ENCODE measurements at regions of chr3 and their contacts with region 1.

Region 1: DNA sequence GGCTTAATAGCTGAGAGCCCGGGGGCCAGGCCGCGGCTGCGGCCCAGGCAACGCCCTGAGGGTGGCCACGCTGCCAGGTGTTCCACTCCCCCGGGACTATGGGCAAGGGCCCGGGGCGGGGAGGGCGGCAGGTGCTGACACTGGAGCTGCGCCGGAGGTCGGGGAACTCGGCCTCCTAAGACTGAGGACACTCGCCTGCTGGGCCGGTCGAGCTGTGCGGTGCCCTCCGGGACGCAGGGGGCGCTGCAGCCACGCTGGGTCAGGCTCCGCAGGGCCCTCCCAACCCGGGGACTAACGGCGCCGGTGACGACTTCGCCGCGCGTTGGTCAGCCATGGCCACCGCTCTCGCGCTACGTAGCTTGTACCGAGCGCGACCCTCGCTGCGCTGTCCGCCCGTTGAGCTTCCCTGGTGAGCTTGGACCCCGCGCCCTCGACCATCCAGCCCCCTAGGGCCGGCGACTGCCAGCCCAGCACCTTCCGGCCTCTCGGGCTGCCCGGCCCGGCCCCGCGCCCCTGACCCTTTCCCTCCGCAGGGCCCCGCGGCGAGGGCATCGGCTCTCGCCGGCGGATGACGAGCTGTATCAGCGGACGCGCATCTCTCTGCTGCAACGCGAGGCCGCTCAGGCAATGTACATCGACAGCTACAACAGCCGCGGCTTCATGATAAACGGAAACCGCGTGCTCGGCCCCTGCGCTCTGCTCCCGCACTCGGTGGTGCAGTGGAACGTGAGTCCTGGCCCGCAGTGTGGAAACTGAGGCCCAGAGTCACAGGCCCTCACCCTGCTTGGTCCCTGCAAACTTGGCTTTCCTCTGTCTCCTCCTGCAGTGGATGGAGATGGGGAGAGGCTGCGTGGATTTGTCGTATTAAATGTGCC is at the start of gene NDUFAF3:
- DNase-seq: peak; percentile 95
- ATAC-seq: peak; percentile 53
- H3K4me3 ChIP-seq: peak within 1 kb of the TSS; percentile 94
- H3K27ac ChIP-seq: peak within 1 kb of the TSS; percentile 95
- H3K4me1 ChIP-seq: peaks cover 35% of the 10 kb centered on the region; the same call in 1 of the 2 replicates
- H3K27me3 ChIP-seq: no peaks in the 10 kb centered on the region
- CTCF ChIP-seq: peak; percentile 86
- total RNA-seq, gene NDUFAF3: 191 and 211 TPM in 2 replicates

Region 2: GRCh38 chr3:48989796-48990635 is 32.0 kb before region 1 on chr3 and contains the start of gene P4HTM:
- CTCF ChIA-PET with region 1: interaction called, 14 read pairs
- POLR2A ChIA-PET with region 1: interaction called, 5 read pairs
- intact Hi-C with region 1: no loop called
- DNase-seq: peak; percentile 88
- ATAC-seq: peak; percentile 73
- H3K4me3 ChIP-seq: peak within 1 kb of the TSS; percentile 90
- H3K27ac ChIP-seq: peak within 1 kb of the TSS; percentile 49
- H3K4me1 ChIP-seq: peaks cover 22% of the 10 kb centered on the region
- H3K27me3 ChIP-seq: no peaks in the 10 kb centered on the region
- CTCF ChIP-seq: peak; percentile 51
- total RNA-seq, gene P4HTM: 44.5 and 50.1 TPM in 2 replicates

Region 3: DNA sequence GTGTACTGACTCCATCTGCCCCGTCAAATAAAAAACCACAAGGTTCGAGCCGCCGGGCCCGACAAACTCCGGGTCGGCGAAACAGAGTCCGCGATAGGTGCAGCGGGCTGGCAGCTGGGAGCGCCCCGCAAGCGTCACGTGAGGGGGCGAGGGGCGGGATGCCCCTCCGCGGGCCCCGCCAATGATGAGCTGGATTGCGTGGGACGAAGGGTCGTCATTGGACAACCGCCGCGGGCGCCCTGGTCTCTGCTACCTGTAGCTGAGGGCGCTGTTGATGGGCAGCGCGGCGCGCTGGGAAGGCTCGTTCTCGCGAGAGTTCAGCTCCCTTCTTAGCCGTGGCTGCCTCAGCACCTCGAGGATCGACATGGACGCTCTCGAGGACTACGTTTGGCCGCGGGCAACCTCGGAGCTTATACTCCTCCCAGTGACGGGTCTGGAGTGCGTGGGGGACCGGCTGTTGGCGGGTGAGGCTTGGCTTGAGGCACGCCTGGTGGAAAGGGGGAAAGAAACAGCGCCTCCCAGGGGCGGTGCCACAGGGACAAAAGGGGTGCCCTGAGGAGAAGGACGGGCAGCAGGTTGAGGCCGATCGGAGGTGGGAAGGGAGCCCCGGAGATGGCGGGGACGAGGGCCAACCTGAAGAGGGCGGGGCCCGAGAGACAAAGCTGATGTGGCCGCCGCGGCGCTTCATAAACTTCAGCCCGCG is 14.8 kb before region 1 on chr3 and contains the start of gene WDR6:
- CTCF ChIA-PET with region 1: interaction called, 8 read pairs
- POLR2A ChIA-PET with region 1: interaction called, 51 read pairs
- intact Hi-C with region 1: loop called (anchors 1 kb)
- DNase-seq: peak; percentile 99
- ATAC-seq: peak; percentile 89
- H3K4me3 ChIP-seq: peak within 1 kb of the TSS; percentile 79
- H3K27ac ChIP-seq: peak within 1 kb of the TSS; percentile 89
- H3K4me1 ChIP-seq: peaks cover 17% of the 10 kb centered on the region
- H3K27me3 ChIP-seq: no peaks in the 10 kb centered on the region
- CTCF ChIP-seq: peak; percentile 55
- total RNA-seq, gene WDR6: 92.7 and 117 TPM in 2 replicates

Region 4: GRCh38 chr3:49057268-49057667 is 35.2 kb after region 1 on chr3:
- CTCF ChIA-PET with region 1: interaction called, 17 read pairs
- POLR2A ChIA-PET with region 1: no interaction called
- intact Hi-C with region 1: no loop called
- DNase-seq: no peak
- ATAC-seq: no peak
- H3K4me3 ChIP-seq: no peak overlapping the region
- H3K27ac ChIP-seq: no peak overlapping the region
- H3K4me1 ChIP-seq: no peaks in the 10 kb centered on the region
- H3K27me3 ChIP-seq: no peaks in the 10 kb centered on the region
- CTCF ChIP-seq: no peak

Region 5: DNA sequence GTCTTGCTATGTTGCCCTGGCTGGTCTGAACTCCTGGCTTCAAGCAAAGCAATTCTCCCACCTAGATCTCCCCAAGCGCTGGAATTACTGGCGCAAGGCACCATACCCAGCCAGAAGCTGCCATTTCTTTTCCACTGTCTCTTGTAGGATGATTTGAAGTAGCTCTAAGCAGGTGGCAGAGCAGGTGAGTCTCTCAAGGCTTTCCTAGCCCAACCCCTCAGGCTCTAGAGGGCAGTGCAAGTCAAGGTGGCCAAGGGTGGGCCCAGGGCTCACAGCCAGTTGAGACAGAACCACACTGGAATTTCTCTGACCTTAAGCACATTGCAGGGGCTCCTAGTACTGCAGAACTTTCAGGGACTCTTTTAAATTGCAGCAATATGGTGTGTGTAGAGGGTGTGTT is 432.4 kb after region 1 on chr3:
- CTCF ChIA-PET with region 1: no interaction called
- POLR2A ChIA-PET with region 1: no interaction called
- intact Hi-C with region 1: no loop called
- DNase-seq: peak; percentile 66
- ATAC-seq: peak; percentile 89
- H3K4me3 ChIP-seq: no peak overlapping the region
- H3K27ac ChIP-seq: no peak overlapping the region
- H3K4me1 ChIP-seq: 0 out of 2 replicates have a peak, but pooled peaks cover 4% of the 10 kb centered on the region
- H3K27me3 ChIP-seq: no peaks in the 10 kb centered on the region
- CTCF ChIP-seq: peak; percentile 65

Region 6: DNA sequence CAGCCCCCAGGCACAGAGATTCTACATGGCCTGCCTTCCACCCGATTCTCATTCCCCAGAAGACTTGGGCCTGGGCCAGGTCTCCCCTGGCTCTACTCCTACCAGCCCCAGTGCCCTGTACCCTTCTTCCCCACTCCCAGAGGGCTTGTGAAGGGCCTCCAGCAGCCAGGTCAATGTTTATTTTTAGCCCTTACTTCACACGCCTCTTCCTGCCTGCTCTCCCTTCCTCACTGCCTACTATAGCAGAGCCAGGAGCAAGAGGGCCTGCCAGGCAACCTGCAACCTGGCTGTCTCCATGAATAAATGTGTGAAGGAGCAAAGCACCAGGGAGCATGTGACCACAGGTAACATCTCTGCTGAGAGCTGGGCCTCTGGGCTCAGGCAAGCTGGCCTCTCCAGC is 625.7 kb after region 1 on chr3:
- CTCF ChIA-PET with region 1: no interaction called
- POLR2A ChIA-PET with region 1: no interaction called
- intact Hi-C with region 1: no loop called
- DNase-seq: no peak
- ATAC-seq: peak; percentile 45
- H3K4me3 ChIP-seq: no peak overlapping the region
- H3K27ac ChIP-seq: no peak overlapping the region
- H3K4me1 ChIP-seq: peaks cover 5% of the 10 kb centered on the region; the same call in 1 of the 2 replicates
- H3K27me3 ChIP-seq: no peaks in the 10 kb centered on the region
- CTCF ChIP-seq: no peak